Pancreas (tissue), 10 donors: ENCODE measurements at regions of chr4 and their contacts with region 1.

Region 1: DNA sequence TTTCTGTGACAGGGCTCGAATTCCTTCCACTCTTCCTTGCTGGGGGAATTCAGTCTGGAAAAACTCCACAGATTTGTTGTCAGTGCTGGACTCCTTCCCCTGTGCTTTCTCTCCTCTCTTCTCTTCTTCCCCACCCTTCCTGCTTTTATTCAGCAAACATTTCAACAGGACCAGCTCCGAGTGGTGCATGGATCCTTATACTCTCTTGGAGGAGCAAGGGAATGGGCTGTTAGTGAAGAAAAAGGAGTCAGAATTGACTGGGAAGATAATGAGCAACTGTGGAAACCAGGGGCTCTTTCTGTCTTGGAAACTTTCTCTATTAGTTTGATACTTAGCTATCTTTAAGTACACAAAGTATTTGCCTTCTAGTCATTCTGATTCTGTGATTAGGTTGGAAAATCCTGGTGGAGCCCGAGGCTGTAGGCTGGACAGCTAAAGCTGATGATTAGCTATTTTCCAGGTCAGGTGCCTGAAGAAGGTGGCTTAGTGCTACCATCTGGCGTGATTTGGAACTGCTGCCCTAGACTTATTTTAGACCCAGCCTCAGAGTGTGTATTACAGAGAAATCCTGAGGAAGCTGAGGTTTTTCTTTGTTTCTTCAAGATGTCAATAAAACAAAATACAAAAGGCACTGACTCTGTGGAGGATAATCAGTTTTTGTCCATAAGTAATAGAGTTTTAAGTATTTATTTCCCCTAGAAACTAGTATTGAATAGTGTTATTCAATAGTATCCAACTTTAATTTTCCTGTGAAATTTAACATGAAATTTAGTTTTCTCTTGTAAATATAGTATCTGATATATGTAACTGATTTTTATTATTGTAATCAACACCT is 38.4 kb downstream of the NAP1L5 start:
- DNase-seq: peak in 4 of 6 donors; percentile 21 to 64 (median 31)
- ATAC-seq: peak; percentile 94 to 99 (median 99)
- H3K4me3 ChIP-seq: no peak overlapping the region
- H3K27ac ChIP-seq: peak overlapping the region in 2 of 4 donors; percentile 21 to 33
- H3K4me1 ChIP-seq: peaks cover 0 to 3% (median 0%) of the 10 kb centered on the region in 3 donors
- H3K27me3 ChIP-seq: no peaks in the 10 kb centered on the region
- CTCF ChIP-seq: peak; percentile 33 to 72 (median 60)

Region 2: GRCh38 chr4:88526221-88526815 is 133.0 kb before region 1 on chr4:
- intact Hi-C with region 1: loop called in 2 of 3 experiments (anchors 5 to 10 kb)
- DNase-seq: no peak
- ATAC-seq: no peak
- H3K4me3 ChIP-seq: no peak overlapping the region
- H3K27ac ChIP-seq: no peak overlapping the region
- H3K4me1 ChIP-seq: peaks cover 5 to 19% (median 17%) of the 10 kb centered on the region in 3 donors
- H3K27me3 ChIP-seq: no peaks in the 10 kb centered on the region
- CTCF ChIP-seq: no peak

Region 3: DNA sequence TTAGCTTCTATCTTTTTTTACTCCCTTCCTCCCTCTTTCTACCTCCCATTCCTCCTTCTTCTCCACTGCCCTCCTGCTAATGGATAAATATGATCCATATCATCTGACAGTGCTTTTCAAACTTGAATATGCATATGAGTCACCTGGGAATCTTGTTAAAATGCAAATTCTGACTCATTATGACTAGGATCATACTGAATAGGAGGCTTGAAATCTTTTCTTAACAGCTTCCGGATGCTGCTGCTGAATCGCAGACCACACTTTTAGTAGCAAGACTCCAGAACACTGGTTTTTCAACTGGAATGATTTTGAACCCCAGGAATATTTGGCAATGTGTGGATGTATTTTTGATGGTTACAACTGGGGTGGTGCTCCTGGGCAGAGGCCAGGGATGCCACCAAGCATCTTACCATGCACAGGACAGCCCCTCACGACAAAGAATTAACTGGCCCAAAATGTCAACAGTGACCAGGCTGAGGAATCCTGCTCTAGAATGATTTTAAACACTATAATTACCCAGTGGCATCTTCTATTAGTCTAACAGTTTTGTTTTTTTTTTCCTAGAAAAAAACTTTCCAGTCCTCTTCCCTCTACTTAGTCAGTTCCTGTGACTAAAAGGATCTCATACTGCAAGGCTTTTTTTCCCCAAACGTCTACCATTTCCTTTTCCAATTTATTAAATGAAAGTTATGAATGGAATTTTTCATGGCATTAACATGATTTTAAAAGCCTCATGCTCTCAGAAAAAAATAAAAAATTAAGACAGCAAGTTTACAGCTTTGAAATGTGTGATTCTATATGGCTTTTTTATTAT is 125.1 kb before region 1 on chr4:
- intact Hi-C with region 1: loop called (anchors 5 to 10 kb)
- DNase-seq: no peak
- ATAC-seq: no peak
- H3K4me3 ChIP-seq: no peak overlapping the region
- H3K27ac ChIP-seq: no peak overlapping the region
- H3K4me1 ChIP-seq: no peaks in the 10 kb centered on the region
- H3K27me3 ChIP-seq: no peaks in the 10 kb centered on the region
- CTCF ChIP-seq: no peak

Region 4: GRCh38 chr4:88720451-88721428 is 61.5 kb after region 1 on chr4:
- intact Hi-C with region 1: no loop called
- DNase-seq: no peak
- ATAC-seq: peak in 1 of 4 donors; percentile 9
- H3K4me3 ChIP-seq: no peak overlapping the region
- H3K27ac ChIP-seq: no peak overlapping the region
- H3K4me1 ChIP-seq: no peaks in the 10 kb centered on the region
- H3K27me3 ChIP-seq: no peaks in the 10 kb centered on the region
- CTCF ChIP-seq: no peak

Region 5: GRCh38 chr4:88814043-88814617 is 154.9 kb after region 1 on chr4:
- intact Hi-C with region 1: no loop called
- DNase-seq: peak in 3 of 6 donors; percentile 41 to 50 (median 41)
- ATAC-seq: peak; percentile 55 to 79 (median 72)
- H3K4me3 ChIP-seq: no peak overlapping the region
- H3K27ac ChIP-seq: peak overlapping the region in 3 of 4 donors; percentile 28 to 50 (median 29)
- H3K4me1 ChIP-seq: peaks cover 20 to 72% (median 65%) of the 10 kb centered on the region in 3 donors
- H3K27me3 ChIP-seq: no peaks in the 10 kb centered on the region
- CTCF ChIP-seq: peak in 3 of 4 donors; percentile 12 to 47 (median 26)

Region 6: GRCh38 chr4:89353514-89353913 is 694.2 kb after region 1 on chr4:
- intact Hi-C with region 1: no loop called
- DNase-seq: no peak
- ATAC-seq: no peak
- H3K4me3 ChIP-seq: no peak overlapping the region
- H3K27ac ChIP-seq: no peak overlapping the region
- H3K4me1 ChIP-seq: no peaks in the 10 kb centered on the region
- H3K27me3 ChIP-seq: no peaks in the 10 kb centered on the region
- CTCF ChIP-seq: no peak